Dendritic cell treated with granulocyte-macrophage colony-stimulating factor and Interleukin-4, amounts not matched to agents 40 ng/mL and 50 ng/mL, for 4 days (primary cell): ENCODE measurements at regions of chr19 and their contacts with region 1.

Region 1: GRCh38 chr19:29714953-29715700 is at the start of gene C19orf12:
- H3K4me3 Mint-ChIP-seq: peak within 1 kb of the TSS; percentile 93
- H3K27ac Mint-ChIP-seq: peak within 1 kb of the TSS; percentile 96
- H3K4me1 Mint-ChIP-seq: peaks cover 57% of the 10 kb centered on the region
- H3K27me3 Mint-ChIP-seq: no peaks in the 10 kb centered on the region

Region 2: DNA sequence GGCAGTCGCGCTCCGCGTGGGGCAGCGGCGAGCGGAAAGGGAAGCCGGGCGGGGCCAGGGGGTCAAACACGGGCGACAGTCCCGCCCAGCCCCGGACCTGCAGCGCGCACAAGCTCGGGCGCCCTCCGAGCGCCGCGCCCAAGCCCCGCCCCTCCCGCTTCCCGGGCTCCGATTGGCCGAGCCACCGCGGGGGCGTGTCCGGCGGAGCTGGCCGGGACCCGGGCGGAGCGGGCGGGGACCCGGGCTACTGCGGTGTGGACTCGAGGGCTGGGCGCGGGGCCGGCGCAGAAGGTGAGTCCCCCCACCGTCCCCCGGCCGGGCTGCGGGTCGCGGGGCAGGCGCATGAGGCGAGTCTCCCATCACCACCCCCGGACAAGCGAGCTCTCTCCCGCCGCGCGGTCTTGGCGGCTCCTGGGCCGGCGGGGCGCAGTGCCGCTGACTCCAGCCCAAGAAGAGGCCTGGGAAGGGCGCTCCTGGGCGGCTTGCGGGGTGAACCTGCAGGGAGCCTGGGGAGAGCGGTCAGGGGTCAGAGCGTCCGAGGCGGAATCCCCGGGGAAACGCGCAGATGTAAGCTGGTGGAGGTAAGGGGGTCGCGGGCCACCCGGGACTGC is 49.8 kb before region 1 on chr19 and contains the start of gene PLEKHF1:
- intact Hi-C with region 1: loop called (anchors 2 kb)
- H3K4me3 Mint-ChIP-seq: peak within 1 kb of the TSS; percentile 68
- H3K27ac Mint-ChIP-seq: no peak within 1 kb of the TSS
- H3K4me1 Mint-ChIP-seq: peaks cover 13% of the 10 kb centered on the region
- H3K27me3 Mint-ChIP-seq: peaks cover 30% of the 10 kb centered on the region

Region 3: GRCh38 chr19:29694669-29695627 is 20.2 kb before region 1 on chr19:
- intact Hi-C with region 1: loop called (anchors 1 kb)
- H3K4me3 Mint-ChIP-seq: no peak overlapping the region
- H3K27ac Mint-ChIP-seq: no peak overlapping the region
- H3K4me1 Mint-ChIP-seq: peaks cover 8% of the 10 kb centered on the region
- H3K27me3 Mint-ChIP-seq: no peaks in the 10 kb centered on the region

Region 4: DNA sequence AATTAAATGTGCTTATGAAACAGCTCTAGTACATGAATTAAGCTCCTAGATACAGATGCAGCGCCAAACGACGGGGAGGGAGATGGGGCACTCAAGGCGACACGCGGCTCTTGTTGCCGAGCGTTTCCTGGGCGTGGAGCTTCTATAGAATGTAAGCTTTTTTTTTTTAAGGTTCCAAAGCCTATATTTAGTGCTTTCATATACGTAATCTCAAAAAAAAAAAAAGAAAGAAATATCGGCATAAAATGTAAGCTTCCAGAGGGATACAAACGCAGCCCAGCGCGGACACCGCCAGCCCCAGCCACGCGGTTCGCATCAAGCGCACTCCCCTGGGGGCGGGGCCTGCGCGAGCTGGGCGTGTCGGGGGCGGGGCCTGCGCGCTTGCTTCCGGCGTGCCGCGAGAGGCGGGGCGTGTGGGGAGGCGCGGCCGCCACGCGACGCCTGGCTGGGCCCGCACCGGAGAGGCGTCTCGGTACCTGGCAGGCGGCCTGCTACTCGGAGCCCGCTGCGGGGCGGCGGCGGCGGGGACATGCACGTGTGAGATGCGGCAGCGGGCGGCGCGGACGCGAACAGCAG is 226.8 kb after region 1 on chr19 and contains the start of gene URI1:
- intact Hi-C with region 1: loop called (anchors 10 kb)
- H3K4me3 Mint-ChIP-seq: peak within 1 kb of the TSS; percentile 95
- H3K27ac Mint-ChIP-seq: peak within 1 kb of the TSS; percentile 81
- H3K4me1 Mint-ChIP-seq: peaks cover 27% of the 10 kb centered on the region
- H3K27me3 Mint-ChIP-seq: peaks cover 9% of the 10 kb centered on the region